ENCODE measurements at regions of chr10 and their contacts with region 1.

Region 1: DNA sequence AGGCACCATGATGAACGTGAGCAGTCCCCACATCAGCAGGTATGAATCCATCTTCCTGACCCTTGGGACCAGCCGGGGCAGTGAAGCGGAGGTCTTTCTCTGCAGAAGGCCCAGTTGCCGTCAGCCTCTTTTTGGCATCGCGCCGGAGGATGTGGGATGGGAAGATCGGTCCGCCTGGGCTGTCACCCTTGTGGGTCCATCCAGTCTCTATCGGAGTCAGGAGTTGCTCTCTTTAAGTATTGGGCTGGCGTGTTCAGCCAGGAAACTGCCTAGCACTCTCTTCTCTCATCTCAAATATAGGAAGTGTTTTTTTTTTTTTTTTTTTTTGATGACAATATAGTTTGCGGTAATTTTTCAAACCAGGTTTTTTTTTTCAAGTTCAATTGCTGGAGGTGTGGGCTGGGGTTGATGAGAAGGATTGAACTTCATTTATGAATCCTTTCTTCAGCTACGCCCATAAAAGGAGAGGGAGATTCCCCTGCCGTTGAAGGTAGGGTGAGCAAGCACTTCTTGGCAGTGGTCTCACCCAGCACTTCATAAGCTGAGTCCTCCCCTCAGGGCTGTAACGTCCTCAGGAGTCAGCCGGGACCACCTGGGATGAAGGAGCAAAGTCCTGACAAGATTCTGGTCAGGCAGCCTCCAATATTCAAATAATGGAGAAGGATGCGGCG is at the start of gene IL2RA:
- DNase-seq: peak; percentile 66
- H3K4me3 Mint-ChIP-seq: peak within 1 kb of the TSS; percentile 100
- H3K27ac Mint-ChIP-seq: peak within 1 kb of the TSS; percentile 99
- H3K4me1 Mint-ChIP-seq: peaks cover 57% of the 10 kb centered on the region
- H3K27me3 Mint-ChIP-seq: no peaks in the 10 kb centered on the region
- total RNA-seq, gene IL2RA: 1,237 and 1,254 TPM in 2 replicates

Region 2: DNA sequence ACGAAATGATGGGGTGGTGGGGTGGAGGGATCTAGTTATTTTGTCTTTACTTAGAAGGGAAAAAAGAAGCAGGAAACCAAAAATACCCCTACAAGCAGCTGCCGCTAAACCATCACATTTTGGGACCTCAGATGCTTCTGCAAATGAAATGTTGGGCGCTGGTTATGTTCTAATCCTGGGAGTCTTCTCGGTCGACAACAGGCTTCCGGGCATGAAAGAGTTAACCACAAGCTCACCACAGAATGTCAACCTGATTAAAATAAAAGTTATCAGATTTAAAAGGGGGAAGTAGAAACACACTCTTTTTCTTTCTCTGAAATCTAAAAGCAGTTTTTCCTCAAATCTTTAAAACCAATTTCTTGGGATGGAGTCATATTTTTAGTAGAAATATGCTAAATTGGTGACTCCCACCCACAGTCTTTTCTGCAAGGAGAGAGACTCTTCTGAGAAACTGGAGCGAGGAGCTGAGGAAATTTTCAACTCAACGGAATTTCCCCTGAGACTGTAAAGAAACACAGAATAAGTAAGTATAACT is 16.9 kb before region 1 on chr10:
- intact Hi-C with region 1: loop called (anchors 1 kb)
- DNase-seq: no peak
- H3K4me3 Mint-ChIP-seq: peak overlapping the region; percentile 64
- H3K27ac Mint-ChIP-seq: peak overlapping the region; percentile 89
- H3K4me1 Mint-ChIP-seq: peaks cover 96% of the 10 kb centered on the region
- H3K27me3 Mint-ChIP-seq: no peaks in the 10 kb centered on the region

Region 3: DNA sequence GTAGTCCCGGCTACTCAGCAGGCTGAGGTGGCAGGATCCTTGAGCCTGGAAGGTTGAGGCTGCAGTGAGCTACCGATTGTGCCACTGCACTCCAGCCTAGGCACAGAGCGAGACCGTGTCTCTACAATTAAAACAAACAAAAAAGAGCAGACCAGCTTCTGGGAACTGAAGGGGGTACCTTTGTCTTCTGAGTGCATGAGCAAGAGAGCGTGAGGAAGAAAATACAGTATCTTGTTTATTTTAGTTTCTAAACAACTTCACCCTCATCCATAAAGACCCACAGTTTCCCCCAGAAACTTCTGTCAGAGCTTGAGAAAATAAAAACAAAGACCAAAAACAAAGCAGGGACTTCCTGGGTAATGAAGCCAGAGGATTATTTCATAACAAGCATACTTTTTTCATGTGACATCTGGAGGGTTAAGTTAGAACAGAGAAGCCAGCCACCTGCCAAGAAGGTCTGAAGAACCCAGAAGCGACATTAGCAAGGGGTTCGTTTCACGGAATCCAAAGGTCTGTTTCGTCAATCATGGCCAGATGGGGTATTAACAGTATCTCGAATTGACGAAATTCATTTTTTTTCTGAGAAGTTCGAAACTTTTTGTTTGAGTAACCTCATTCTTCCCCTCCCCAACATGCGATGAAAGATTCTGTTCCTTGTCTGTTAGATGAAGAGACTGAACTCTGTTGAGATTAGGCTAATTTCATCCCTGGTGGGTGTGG is 10.1 kb after region 1 on chr10:
- intact Hi-C with region 1: loop called (anchors 1 kb)
- DNase-seq: peak; percentile 29
- H3K4me3 Mint-ChIP-seq: peak overlapping the region; percentile 59
- H3K27ac Mint-ChIP-seq: peak overlapping the region; percentile 97
- H3K4me1 Mint-ChIP-seq: peaks cover 80% of the 10 kb centered on the region
- H3K27me3 Mint-ChIP-seq: no peaks in the 10 kb centered on the region

Region 4: GRCh38 chr10:6083523-6084475 is 21.6 kb after region 1 on chr10:
- intact Hi-C with region 1: loop called (anchors 1 kb)
- DNase-seq: peak; percentile 67
- H3K4me3 Mint-ChIP-seq: peak overlapping the region; percentile 80
- H3K27ac Mint-ChIP-seq: peak overlapping the region; percentile 94
- H3K4me1 Mint-ChIP-seq: peaks cover 64% of the 10 kb centered on the region
- H3K27me3 Mint-ChIP-seq: no peaks in the 10 kb centered on the region

Region 5: GRCh38 chr10:6088721-6089390 is 26.6 kb after region 1 on chr10 and contains the start of gene RBM17:
- intact Hi-C with region 1: loop called (anchors 1 kb)
- DNase-seq: peak; percentile 98
- H3K4me3 Mint-ChIP-seq: peak within 1 kb of the TSS; percentile 95
- H3K27ac Mint-ChIP-seq: peak within 1 kb of the TSS; percentile 88
- H3K4me1 Mint-ChIP-seq: peaks cover 63% of the 10 kb centered on the region
- H3K27me3 Mint-ChIP-seq: no peaks in the 10 kb centered on the region
- total RNA-seq, gene RBM17: 265 and 283 TPM in 2 replicates

Region 6: GRCh38 chr10:6136215-6137201 is 74.3 kb after region 1 on chr10:
- intact Hi-C with region 1: loop called (anchors 2 kb)
- DNase-seq: peak; percentile 43
- H3K4me3 Mint-ChIP-seq: peak overlapping the region; percentile 49
- H3K27ac Mint-ChIP-seq: peak overlapping the region; percentile 91
- H3K4me1 Mint-ChIP-seq: peaks cover 66% of the 10 kb centered on the region
- H3K27me3 Mint-ChIP-seq: peaks cover 9% of the 10 kb centered on the region

Measured in activated T-helper 1 cell treated with anti-CD3 and anti-CD28 coated beads, Interleukin-12 subunit alpha, Interleukin-12 subunit beta, Interleukin-2, Interleukin-4 antibody, amounts not matched to agents 30 ng/mL and 10 ng/mL and 1 ng/mL, durations not matched to agents 14 hours and 24 hours and 36 hours (primary cell).